Endothelial cell of umbilical vein (primary cell): ENCODE measurements at regions of chr20 and their contacts with region 1.

Region 1: DNA sequence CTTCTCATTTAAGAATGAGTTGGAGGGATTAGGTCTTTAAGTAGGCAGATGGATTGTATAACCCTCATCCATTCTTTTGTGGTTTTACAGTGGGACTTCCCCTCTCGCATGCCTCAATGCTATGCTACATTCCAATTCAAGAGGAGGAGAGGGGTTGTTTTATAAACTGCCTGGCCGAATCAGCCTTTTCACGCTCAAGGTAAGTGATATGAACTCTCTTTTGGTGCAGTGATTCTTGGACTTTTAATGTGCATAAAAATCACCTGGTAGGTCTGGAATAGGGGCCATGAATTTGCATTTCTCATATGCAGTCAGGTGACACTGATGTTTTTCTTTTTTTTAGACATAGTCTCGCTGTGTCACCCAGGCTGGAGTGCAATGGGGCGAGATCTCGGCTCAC is 10.8 kb downstream of the ASXL1 start:
- DNase-seq: no peak
- H3K4me3 ChIP-seq: no peak overlapping the region
- H3K27ac ChIP-seq: no peak overlapping the region
- H3K4me1 ChIP-seq: peaks cover 3% of the 10 kb centered on the region
- H3K27me3 ChIP-seq: no peaks in the 10 kb centered on the region
- CTCF ChIP-seq: no peak
- POLR2A ChIP-seq: no peak

Region 2: DNA sequence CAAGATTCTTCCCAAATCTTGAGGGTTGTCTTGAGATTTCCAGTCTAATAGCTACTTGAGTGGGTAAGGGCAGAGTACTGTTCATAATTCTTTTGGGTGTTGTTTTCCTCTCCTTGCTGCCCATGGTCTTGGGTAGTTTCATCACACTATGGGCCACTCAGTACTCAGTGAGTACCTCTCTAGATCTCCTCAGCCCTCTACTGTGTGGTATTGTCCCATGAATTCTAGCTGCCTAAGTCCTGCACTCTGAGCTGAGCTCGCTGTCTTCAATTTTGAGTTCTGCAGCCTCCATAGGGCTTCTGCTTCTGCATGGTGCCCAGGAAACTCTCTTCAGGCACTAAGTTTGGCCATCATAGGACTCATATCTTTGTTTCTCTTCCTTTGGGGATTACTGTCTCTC is 31.6 kb after region 1 on chr20:
- CTCF ChIA-PET with region 1: no interaction called
- POLR2A ChIA-PET with region 1: no interaction called
- dilution Hi-C with region 1: no loop called
- intact Hi-C with region 1: loop called (anchors 5 kb)
- DNase-seq: no peak
- H3K4me3 ChIP-seq: no peak overlapping the region
- H3K27ac ChIP-seq: no peak overlapping the region
- H3K4me1 ChIP-seq: no peaks in the 10 kb centered on the region
- H3K27me3 ChIP-seq: no peaks in the 10 kb centered on the region
- CTCF ChIP-seq: no peak
- POLR2A ChIP-seq: no peak

Region 3: DNA sequence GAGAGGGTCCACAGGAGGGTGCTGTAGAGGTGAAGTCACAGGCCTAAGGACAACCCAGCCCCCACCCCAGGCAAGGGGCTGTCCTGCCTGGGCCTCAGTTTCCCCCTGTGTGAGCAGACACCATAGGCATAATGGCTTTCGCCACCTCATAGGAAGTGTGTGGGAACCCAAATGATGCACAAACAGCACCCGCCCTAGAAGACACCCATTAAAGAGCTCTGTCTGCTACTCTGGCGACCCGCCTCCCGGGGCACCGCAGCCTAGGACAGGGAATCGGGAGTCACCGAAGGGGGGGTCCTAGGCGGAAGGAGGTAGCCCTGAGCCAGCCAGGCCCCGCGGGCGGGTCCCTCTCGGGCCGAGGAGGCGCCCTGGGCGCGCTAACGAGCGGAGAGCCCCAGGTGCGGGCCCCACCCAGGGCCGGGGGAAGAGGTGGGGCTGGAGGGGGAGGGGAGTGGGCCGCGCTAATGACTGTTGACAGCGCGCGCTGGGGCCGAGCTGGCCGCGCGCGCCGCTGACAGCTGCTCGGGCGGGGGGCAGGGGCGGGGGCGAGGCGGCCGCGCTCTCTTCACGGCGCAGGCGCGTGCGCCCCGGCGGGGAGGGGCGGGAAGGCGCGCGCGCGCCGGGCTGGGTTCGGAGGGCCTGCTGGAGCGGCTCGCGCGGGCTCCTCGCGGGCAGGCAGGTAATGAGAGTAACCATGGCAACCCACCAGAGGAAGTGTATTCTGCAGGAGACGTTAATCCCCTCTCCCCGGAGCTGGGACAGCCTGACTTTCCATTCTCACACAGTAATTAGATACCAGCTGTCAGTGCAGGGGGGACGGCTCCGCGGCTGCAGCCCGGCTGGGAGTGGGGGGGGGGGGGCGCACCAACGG is 167.3 kb after region 1 on chr20:
- CTCF ChIA-PET with region 1: no interaction called
- POLR2A ChIA-PET with region 1: no interaction called
- dilution Hi-C with region 1: no loop called
- intact Hi-C with region 1: no loop called
- DNase-seq: no peak
- H3K4me3 ChIP-seq: peak overlapping the region in 1 of 3 experiments; percentile 38
- H3K27ac ChIP-seq: no peak overlapping the region
- H3K4me1 ChIP-seq: peaks cover 6% of the 10 kb centered on the region
- H3K27me3 ChIP-seq: peaks cover 0 to 6% of the 10 kb centered on the region in 2 experiments
- CTCF ChIP-seq: no peak
- POLR2A ChIP-seq: no peak